HCT116 (cell line): ENCODE measurements at regions of chr3 and their contacts with region 1.

Region 1: GRCh38 chr3:187738331-187739093 is 6.8 kb downstream of the BCL6 start:
- DNase-seq: peak; percentile 83
- ATAC-seq: peak; percentile 70
- H3K4me3 ChIP-seq: peak overlapping the region; percentile 62 to 85
- H3K27ac ChIP-seq: peak overlapping the region; percentile 44
- H3K4me1 ChIP-seq: peaks cover 28 to 67% of the 10 kb centered on the region in 2 experiments
- H3K27me3 ChIP-seq: no peaks in the 10 kb centered on the region
- CTCF ChIP-seq: peak in 2 of 3 experiments; percentile 76 to 82; a peak in 4 of 6 replicates
- POLR2A ChIP-seq: no peak
- RAD21 ChIP-seq: no peak

Region 2: GRCh38 chr3:188106887-188107830 is 368.6 kb after region 1 on chr3:
- CTCF ChIA-PET with region 1: no interaction called
- POLR2A ChIA-PET with region 1: no interaction called
- RAD21 ChIA-PET with region 1: no interaction called
- intact Hi-C with region 1: no loop called
- DNase-seq: no peak
- ATAC-seq: no peak
- H3K4me3 ChIP-seq: no peak overlapping the region
- H3K27ac ChIP-seq: no peak overlapping the region
- H3K4me1 ChIP-seq: no peaks in the 10 kb centered on the region
- H3K27me3 ChIP-seq: no peaks in the 10 kb centered on the region
- CTCF ChIP-seq: no peak
- POLR2A ChIP-seq: no peak
- RAD21 ChIP-seq: no peak

Region 3: DNA sequence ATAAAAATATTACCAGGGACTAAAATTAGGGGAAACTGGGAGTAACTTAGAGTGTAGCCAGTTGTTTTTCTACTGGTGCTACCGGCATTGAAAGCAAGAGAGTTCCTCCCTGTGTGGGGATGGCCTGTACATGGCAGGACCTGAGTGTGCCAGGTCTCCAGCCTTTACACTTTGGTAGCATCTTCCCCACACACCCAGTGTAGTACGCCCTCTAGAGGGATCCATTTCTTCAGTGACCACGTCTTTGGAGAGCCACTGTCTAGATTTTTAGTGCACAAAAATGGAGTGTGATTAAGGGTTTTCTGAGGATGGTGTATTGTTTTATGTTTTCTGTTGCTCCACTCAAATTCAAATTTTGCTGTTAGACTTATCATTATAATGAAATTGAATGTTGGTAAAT is 926.3 kb after region 1 on chr3:
- CTCF ChIA-PET with region 1: interaction called, 4 read pairs
- POLR2A ChIA-PET with region 1: no interaction called
- RAD21 ChIA-PET with region 1: no interaction called
- intact Hi-C with region 1: loop called (anchors 2 kb)
- DNase-seq: peak; percentile 31
- ATAC-seq: peak; percentile 91
- H3K4me3 ChIP-seq: no peak overlapping the region
- H3K27ac ChIP-seq: no peak overlapping the region
- H3K4me1 ChIP-seq: no peaks in the 10 kb centered on the region
- H3K27me3 ChIP-seq: no peaks in the 10 kb centered on the region
- CTCF ChIP-seq: peak; percentile 39 to 60 (median 59); a peak in 5 of 6 replicates
- POLR2A ChIP-seq: no peak
- RAD21 ChIP-seq: peak; percentile 72

Region 4: DNA sequence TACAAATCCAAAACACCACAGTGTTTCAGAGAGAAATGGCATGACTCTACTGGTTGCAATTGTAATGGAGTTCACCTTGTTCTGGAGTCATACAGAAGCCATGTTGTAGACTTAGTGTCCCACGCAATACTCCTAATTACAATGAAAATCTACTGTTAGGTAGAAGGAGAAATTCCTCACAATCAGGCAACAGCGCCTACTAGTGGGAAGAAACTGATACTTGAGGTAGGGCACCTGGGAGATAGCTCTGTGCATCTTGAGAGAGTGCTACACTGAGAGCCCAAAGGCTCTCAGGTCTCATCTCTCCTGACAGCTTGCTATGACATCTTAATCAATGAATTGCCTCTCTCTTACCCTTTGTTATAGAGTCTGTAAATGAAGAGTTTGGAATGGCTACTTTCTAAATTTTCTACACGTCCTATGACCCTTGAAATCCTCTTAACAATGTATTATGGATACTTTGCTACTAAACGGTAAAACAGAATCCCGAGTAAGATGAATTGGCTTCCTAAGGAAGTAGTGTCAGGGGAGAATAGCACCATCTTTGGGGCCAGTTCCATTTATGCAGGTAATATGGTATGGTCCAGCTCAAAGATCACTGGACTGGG is 1010.6 kb after region 1 on chr3:
- CTCF ChIA-PET with region 1: interaction called, 5 read pairs
- POLR2A ChIA-PET with region 1: no interaction called
- RAD21 ChIA-PET with region 1: no interaction called
- intact Hi-C with region 1: loop called (anchors 5 kb)
- DNase-seq: peak; percentile 15
- ATAC-seq: peak; percentile 85
- H3K4me3 ChIP-seq: no peak overlapping the region
- H3K27ac ChIP-seq: no peak overlapping the region
- H3K4me1 ChIP-seq: no peaks in the 10 kb centered on the region
- H3K27me3 ChIP-seq: no peaks in the 10 kb centered on the region
- CTCF ChIP-seq: peak; percentile 34 to 90 (median 75); a peak in 5 of 6 replicates
- POLR2A ChIP-seq: no peak
- RAD21 ChIP-seq: peak; percentile 59

Region 5: GRCh38 chr3:188947401-188948280 is 1209.1 kb after region 1 on chr3:
- CTCF ChIA-PET with region 1: interaction called, 260 read pairs
- POLR2A ChIA-PET with region 1: interaction called, 5 read pairs
- RAD21 ChIA-PET with region 1: interaction called in 1 of 2 experiments, 3 read pairs
- intact Hi-C with region 1: no loop called
- DNase-seq: peak; percentile 84
- ATAC-seq: peak; percentile 80
- H3K4me3 ChIP-seq: peak overlapping the region; percentile 44 to 56
- H3K27ac ChIP-seq: peak overlapping the region; percentile 87
- H3K4me1 ChIP-seq: peaks cover 46 to 59% of the 10 kb centered on the region in 2 experiments
- H3K27me3 ChIP-seq: no peaks in the 10 kb centered on the region
- CTCF ChIP-seq: peak in 2 of 3 experiments; percentile 47 to 56; a peak in 4 of 6 replicates
- POLR2A ChIP-seq: peak; percentile 46
- RAD21 ChIP-seq: no peak

Region 6: GRCh38 chr3:189041482-189042090 is 1303.1 kb after region 1 on chr3:
- CTCF ChIA-PET with region 1: interaction called, 17 read pairs
- POLR2A ChIA-PET with region 1: no interaction called
- RAD21 ChIA-PET with region 1: interaction called in 1 of 2 experiments, 3 read pairs
- intact Hi-C with region 1: loop called (anchors 1 kb)
- DNase-seq: peak; percentile 51
- ATAC-seq: peak; percentile 88
- H3K4me3 ChIP-seq: no peak overlapping the region
- H3K27ac ChIP-seq: no peak overlapping the region
- H3K4me1 ChIP-seq: no peaks in the 10 kb centered on the region
- H3K27me3 ChIP-seq: no peaks in the 10 kb centered on the region
- CTCF ChIP-seq: peak; percentile 44 to 79 (median 68); a peak in 5 of 6 replicates
- POLR2A ChIP-seq: no peak
- RAD21 ChIP-seq: peak; percentile 56

Region 7: GRCh38 chr3:189148081-189148507 is 1409.6 kb after region 1 on chr3:
- CTCF ChIA-PET with region 1: interaction called, 10 read pairs
- POLR2A ChIA-PET with region 1: no interaction called
- RAD21 ChIA-PET with region 1: no interaction called
- intact Hi-C with region 1: loop called (anchors 1 kb)
- DNase-seq: peak; percentile 37
- ATAC-seq: peak; percentile 85
- H3K4me3 ChIP-seq: no peak overlapping the region
- H3K27ac ChIP-seq: no peak overlapping the region
- H3K4me1 ChIP-seq: peaks cover 4 to 5% of the 10 kb centered on the region in 2 experiments; a peak in 2 of 4 replicates
- H3K27me3 ChIP-seq: no peaks in the 10 kb centered on the region
- CTCF ChIP-seq: peak; percentile 71 to 85 (median 79); a peak in 5 of 6 replicates
- POLR2A ChIP-seq: no peak
- RAD21 ChIP-seq: peak; percentile 89

Region 8: GRCh38 chr3:189233225-189233858 is 1494.8 kb after region 1 on chr3:
- CTCF ChIA-PET with region 1: interaction called, 20 read pairs
- POLR2A ChIA-PET with region 1: no interaction called
- RAD21 ChIA-PET with region 1: no interaction called
- intact Hi-C with region 1: loop called (anchors 1 kb)
- DNase-seq: peak; percentile 70
- ATAC-seq: peak; percentile 95
- H3K4me3 ChIP-seq: no peak overlapping the region
- H3K27ac ChIP-seq: no peak overlapping the region
- H3K4me1 ChIP-seq: no peaks in the 10 kb centered on the region
- H3K27me3 ChIP-seq: no peaks in the 10 kb centered on the region
- CTCF ChIP-seq: peak; percentile 90 to 96 (median 90)
- POLR2A ChIP-seq: no peak
- RAD21 ChIP-seq: peak; percentile 95